ENCODE measurements at regions of chr6 and their contacts with region 1.

Region 1: GRCh38 chr6:166490671-166491500 is 95.6 kb downstream of the RAMACL start:
- DNase-seq: peak in 1 of 2 donors; percentile 47
- ATAC-seq: no peak
- H3K4me3 ChIP-seq: no peak overlapping the region
- H3K27ac ChIP-seq: no peak overlapping the region
- H3K4me1 ChIP-seq: no peaks in the 10 kb centered on the region
- H3K27me3 ChIP-seq: no peaks in the 10 kb centered on the region

Region 2: GRCh38 chr6:165725201-165725600 is 765.7 kb before region 1 on chr6:
- intact Hi-C with region 1: no loop called
- DNase-seq: no peak
- ATAC-seq: no peak
- H3K4me3 ChIP-seq: no peak overlapping the region
- H3K27ac ChIP-seq: no peak overlapping the region
- H3K4me1 ChIP-seq: no peaks in the 10 kb centered on the region
- H3K27me3 ChIP-seq: no peaks in the 10 kb centered on the region

Region 3: DNA sequence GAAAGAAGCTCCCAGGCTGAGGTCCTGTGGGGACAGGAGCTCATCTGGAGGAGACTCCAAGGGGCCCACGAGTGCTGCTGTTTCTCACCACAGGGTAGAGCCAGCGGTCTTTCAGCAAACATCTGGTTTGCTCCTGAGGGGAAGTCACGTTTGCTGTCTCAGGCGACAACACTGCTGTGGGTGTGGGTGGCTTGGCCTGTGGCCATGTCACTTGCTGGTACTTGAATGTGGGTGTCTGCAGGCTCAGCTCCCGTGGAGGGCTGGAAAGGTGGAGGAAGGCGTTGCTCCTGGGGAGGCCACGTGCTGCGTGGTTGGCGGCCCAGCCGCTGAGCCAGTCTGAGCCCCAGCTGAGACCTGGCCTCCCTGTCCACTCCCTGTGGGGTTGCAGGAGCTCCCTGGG is 55.3 kb before region 1 on chr6:
- intact Hi-C with region 1: no loop called
- DNase-seq: peak in 1 of 2 donors; percentile 64
- ATAC-seq: no peak
- H3K4me3 ChIP-seq: no peak overlapping the region
- H3K27ac ChIP-seq: no peak overlapping the region
- H3K4me1 ChIP-seq: no peaks in the 10 kb centered on the region
- H3K27me3 ChIP-seq: no peaks in the 10 kb centered on the region

Region 4: GRCh38 chr6:166736634-166737033 is 245.7 kb after region 1 on chr6:
- intact Hi-C with region 1: loop called in 1 of 2 experiments (anchors 10 kb)
- DNase-seq: no peak
- ATAC-seq: no peak
- H3K4me3 ChIP-seq: no peak overlapping the region
- H3K27ac ChIP-seq: no peak overlapping the region
- H3K4me1 ChIP-seq: no peaks in the 10 kb centered on the region
- H3K27me3 ChIP-seq: no peaks in the 10 kb centered on the region

Region 5: GRCh38 chr6:168218785-168219566 is 1728.1 kb after region 1 on chr6:
- intact Hi-C with region 1: no loop called
- DNase-seq: peak in 1 of 2 donors; percentile 81
- ATAC-seq: peak; percentile 65
- H3K4me3 ChIP-seq: no peak overlapping the region
- H3K27ac ChIP-seq: peak overlapping the region in 1 of 2 donors; percentile 83
- H3K4me1 ChIP-seq: no peaks in the 10 kb centered on the region
- H3K27me3 ChIP-seq: no peaks in the 10 kb centered on the region